ENCODE measurements at regions of chr19 and their contacts with region 1.

Region 1: DNA sequence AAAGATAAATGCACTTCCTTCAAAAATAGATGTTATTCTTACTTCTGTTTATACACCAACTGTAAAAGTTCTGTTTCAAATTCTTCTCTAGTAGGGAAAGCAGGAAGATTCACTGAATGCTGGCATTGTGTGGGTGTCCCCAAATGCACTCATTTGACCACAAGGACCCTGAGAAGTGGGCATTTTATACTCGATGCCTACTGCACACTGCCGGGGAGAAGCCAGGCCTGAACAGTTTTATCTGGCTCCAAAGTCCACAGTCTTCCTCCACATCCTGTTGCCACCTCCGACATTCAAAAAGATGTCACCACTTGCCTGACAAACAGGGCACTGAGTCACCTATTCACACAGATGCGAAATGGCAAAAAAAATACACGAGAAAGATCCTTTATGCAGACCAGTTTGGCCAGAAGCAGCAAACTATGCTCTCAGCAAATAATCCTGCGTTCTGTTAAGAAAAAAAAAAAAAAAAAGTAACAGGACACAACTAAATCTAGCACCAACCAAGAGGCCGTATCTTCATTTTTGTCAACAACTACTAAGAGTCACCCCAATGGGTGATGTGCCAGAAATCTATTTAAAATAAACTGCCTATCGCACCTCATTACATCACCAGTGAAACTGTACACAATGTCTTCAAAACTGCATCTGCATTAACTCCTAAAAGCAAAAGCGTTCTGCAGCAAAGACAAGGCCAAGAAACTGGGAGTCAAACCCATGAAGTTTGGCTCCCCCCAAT is 6.2 kb downstream of the ZC3H4 start:
- DNase-seq: peak; percentile 21
- H3K4me3 Mint-ChIP-seq: peak overlapping the region; percentile 21
- H3K27ac Mint-ChIP-seq: peak overlapping the region; percentile 99
- H3K4me1 Mint-ChIP-seq: peaks cover 32% of the 10 kb centered on the region
- H3K27me3 Mint-ChIP-seq: no peaks in the 10 kb centered on the region
- CTCF ChIP-seq: no peak

Region 2: GRCh38 chr19:47094557-47095475 is 12.6 kb before region 1 on chr19:
- CTCF ChIA-PET with region 1: no interaction called
- POLR2A ChIA-PET with region 1: interaction called, 49 read pairs
- intact Hi-C with region 1: no loop called
- DNase-seq: no peak
- H3K4me3 Mint-ChIP-seq: no peak overlapping the region
- H3K27ac Mint-ChIP-seq: peak overlapping the region; percentile 92
- H3K4me1 Mint-ChIP-seq: peaks cover 21% of the 10 kb centered on the region
- H3K27me3 Mint-ChIP-seq: no peaks in the 10 kb centered on the region
- CTCF ChIP-seq: no peak